ENCODE measurements at regions of chr12 and their contacts with region 1.

Region 1: DNA sequence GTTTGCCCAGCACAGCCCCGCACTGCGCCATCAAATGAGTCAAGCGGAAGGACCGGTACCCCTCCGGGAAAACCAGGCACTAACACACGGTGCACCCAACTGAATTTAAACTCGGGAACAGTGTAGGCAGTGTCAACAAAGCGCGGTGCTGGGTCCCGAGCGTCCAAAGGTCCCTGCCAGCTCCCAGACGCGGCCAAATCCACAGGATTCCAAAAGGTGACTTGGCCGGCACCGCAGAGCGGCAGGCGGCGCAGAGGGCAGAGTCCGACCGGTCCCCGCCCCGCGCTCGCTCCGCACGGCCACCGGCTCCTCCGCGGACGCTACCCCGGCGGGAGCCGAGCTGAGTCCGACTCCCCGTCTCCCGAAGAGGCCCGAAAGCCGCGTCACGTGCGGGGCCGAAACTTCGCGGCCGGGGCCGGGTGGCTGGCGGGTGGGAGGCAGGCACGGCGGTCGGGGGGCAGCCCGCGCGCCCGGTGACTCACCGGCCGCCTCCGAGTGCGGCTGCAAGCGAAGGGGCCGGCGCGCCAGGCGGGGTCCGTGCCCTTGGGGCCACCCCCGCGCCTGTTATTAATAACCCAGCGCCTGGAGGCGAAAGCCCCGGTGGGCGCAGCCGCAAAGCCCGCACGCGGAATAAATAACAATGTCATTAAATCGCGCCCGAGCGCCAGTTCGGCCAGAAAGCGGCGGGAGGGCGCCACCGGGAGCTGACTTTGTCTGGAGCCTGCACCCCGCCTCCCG is 863 bp downstream of the DENND5B start:
- DNase-seq: no peak
- H3K4me3 ChIP-seq: peak overlapping the region; percentile 89
- CTCF ChIP-seq: no peak

Region 2: GRCh38 chr12:31491819-31492598 is 98.1 kb before region 1 on chr12:
- in situ Hi-C with region 1: loop called (anchors 25 kb)
- DNase-seq: peak; percentile 87
- H3K4me3 ChIP-seq: no peak overlapping the region
- CTCF ChIP-seq: no peak